B cell (primary cell): ENCODE measurements at regions of chr9 and their contacts with region 1.

Region 1: GRCh38 chr9:114653556-114654159 is 3.9 kb downstream of the TEX53 start:
- DNase-seq: peak; percentile 85
- ATAC-seq: peak; percentile 94
- H3K4me3 ChIP-seq: no peak overlapping the region
- H3K4me3 Mint-ChIP-seq: no peak overlapping the region
- H3K27ac ChIP-seq: peak overlapping the region in 1 of 2 donors; percentile 51
- H3K27ac Mint-ChIP-seq: no peak overlapping the region
- H3K4me1 ChIP-seq: peaks cover 22 to 24% of the 10 kb centered on the region in 2 donors
- H3K4me1 Mint-ChIP-seq: peaks cover 21% of the 10 kb centered on the region
- H3K27me3 ChIP-seq: no peaks in the 10 kb centered on the region
- H3K27me3 Mint-ChIP-seq: no peaks in the 10 kb centered on the region
- CTCF ChIP-seq: peak; percentile 96

Region 2: DNA sequence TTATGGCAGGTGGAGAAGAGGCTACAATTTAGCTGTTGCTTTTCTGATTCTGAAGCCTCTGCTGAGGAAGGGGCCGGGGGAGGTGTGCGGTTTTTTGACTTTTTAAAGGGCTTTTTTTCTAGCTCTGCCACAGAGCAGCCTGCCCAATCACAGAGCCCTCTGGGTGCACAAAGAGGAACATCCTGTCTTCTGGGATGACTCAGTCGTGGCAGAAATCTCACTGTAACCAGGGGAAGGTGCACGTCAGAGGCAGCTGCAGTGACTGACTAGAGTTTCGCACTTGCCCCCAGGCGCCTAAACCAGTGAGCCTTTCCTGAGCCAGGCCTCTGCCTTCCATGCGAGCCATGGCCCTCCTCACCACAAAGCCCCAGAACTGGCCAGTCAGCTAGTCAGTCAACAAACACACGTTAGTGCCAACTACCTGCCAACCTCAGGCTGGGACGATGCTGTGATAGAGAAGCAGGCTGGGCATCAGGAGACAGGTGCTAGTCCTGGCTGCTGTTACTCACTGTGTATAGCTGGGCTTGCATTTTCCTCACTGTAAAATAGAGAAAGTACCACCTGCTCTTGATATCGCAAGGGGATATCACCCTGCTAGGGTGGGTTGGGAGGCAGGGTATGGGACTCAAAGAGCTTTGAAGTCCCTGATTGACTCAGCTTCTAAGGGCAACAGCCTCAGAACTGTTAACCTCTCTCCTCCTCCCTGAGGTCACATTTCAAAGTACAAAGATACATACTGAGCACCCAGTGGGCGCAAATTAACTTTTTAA is 268.1 kb before region 1 on chr9:
- CTCF ChIA-PET with region 1: interaction called, 10 read pairs
- POLR2A ChIA-PET with region 1: no interaction called
- intact Hi-C with region 1: no loop called
- DNase-seq: peak; percentile 92
- ATAC-seq: peak; percentile 83
- H3K4me3 ChIP-seq: peak overlapping the region; percentile 75 to 96 (median 89)
- H3K4me3 Mint-ChIP-seq: peak overlapping the region; percentile 97
- H3K27ac ChIP-seq: peak overlapping the region; percentile 87 to 93
- H3K27ac Mint-ChIP-seq: peak overlapping the region; percentile 93
- H3K4me1 ChIP-seq: peaks cover 65 to 81% of the 10 kb centered on the region in 2 donors
- H3K4me1 Mint-ChIP-seq: peaks cover 81% of the 10 kb centered on the region
- H3K27me3 ChIP-seq: no peaks in the 10 kb centered on the region
- H3K27me3 Mint-ChIP-seq: no peaks in the 10 kb centered on the region
- CTCF ChIP-seq: peak; percentile 8

Region 3: GRCh38 chr9:114434878-114435311 is 218.8 kb before region 1 on chr9:
- CTCF ChIA-PET with region 1: interaction called, 184 read pairs
- POLR2A ChIA-PET with region 1: no interaction called
- intact Hi-C with region 1: loop called (anchors 1 kb)
- DNase-seq: peak; percentile 70
- ATAC-seq: peak; percentile 76
- H3K4me3 ChIP-seq: no peak overlapping the region
- H3K4me3 Mint-ChIP-seq: no peak overlapping the region
- H3K27ac ChIP-seq: no peak overlapping the region
- H3K27ac Mint-ChIP-seq: no peak overlapping the region
- H3K4me1 ChIP-seq: no peaks in the 10 kb centered on the region
- H3K4me1 Mint-ChIP-seq: peaks cover 2% of the 10 kb centered on the region
- H3K27me3 ChIP-seq: peaks cover 0 to under 1% (median 0%) of the 10 kb centered on the region in 4 experiments
- H3K27me3 Mint-ChIP-seq: peaks cover 5% of the 10 kb centered on the region
- CTCF ChIP-seq: peak; percentile 72

Region 4: GRCh38 chr9:114505187-114506081 is 148.2 kb before region 1 on chr9 and contains the start of gene WHRN:
- CTCF ChIA-PET with region 1: interaction called, 78 read pairs
- POLR2A ChIA-PET with region 1: no interaction called
- intact Hi-C with region 1: loop called (anchors 1 kb)
- DNase-seq: peak; percentile 95
- ATAC-seq: peak; percentile 85
- H3K4me3 ChIP-seq: peak within 1 kb of the TSS; percentile 53 to 77 (median 65)
- H3K4me3 Mint-ChIP-seq: peak within 1 kb of the TSS; percentile 90
- H3K27ac ChIP-seq: peak within 1 kb of the TSS in 1 of 2 donors; percentile 62
- H3K27ac Mint-ChIP-seq: peak within 1 kb of the TSS; percentile 90
- H3K4me1 ChIP-seq: peaks cover 29 to 41% of the 10 kb centered on the region in 2 donors
- H3K4me1 Mint-ChIP-seq: peaks cover 43% of the 10 kb centered on the region
- H3K27me3 ChIP-seq: peaks cover 0 to 17% (median 9%) of the 10 kb centered on the region in 4 experiments
- H3K27me3 Mint-ChIP-seq: peaks cover 29% of the 10 kb centered on the region
- CTCF ChIP-seq: no peak
- total RNA-seq, gene WHRN: 95.7 and 96.6 TPM in 2 replicates

Region 5: GRCh38 chr9:114606068-114606467 is 47.6 kb before region 1 on chr9:
- CTCF ChIA-PET with region 1: interaction called, 18 read pairs
- POLR2A ChIA-PET with region 1: no interaction called
- intact Hi-C with region 1: no loop called
- DNase-seq: no peak
- ATAC-seq: no peak
- H3K4me3 ChIP-seq: no peak overlapping the region
- H3K4me3 Mint-ChIP-seq: no peak overlapping the region
- H3K27ac ChIP-seq: no peak overlapping the region
- H3K27ac Mint-ChIP-seq: peak overlapping the region; percentile 53
- H3K4me1 ChIP-seq: peaks cover 41 to 46% of the 10 kb centered on the region in 2 donors
- H3K4me1 Mint-ChIP-seq: peaks cover 50% of the 10 kb centered on the region
- H3K27me3 ChIP-seq: no peaks in the 10 kb centered on the region
- H3K27me3 Mint-ChIP-seq: no peaks in the 10 kb centered on the region
- CTCF ChIP-seq: no peak

Region 6: DNA sequence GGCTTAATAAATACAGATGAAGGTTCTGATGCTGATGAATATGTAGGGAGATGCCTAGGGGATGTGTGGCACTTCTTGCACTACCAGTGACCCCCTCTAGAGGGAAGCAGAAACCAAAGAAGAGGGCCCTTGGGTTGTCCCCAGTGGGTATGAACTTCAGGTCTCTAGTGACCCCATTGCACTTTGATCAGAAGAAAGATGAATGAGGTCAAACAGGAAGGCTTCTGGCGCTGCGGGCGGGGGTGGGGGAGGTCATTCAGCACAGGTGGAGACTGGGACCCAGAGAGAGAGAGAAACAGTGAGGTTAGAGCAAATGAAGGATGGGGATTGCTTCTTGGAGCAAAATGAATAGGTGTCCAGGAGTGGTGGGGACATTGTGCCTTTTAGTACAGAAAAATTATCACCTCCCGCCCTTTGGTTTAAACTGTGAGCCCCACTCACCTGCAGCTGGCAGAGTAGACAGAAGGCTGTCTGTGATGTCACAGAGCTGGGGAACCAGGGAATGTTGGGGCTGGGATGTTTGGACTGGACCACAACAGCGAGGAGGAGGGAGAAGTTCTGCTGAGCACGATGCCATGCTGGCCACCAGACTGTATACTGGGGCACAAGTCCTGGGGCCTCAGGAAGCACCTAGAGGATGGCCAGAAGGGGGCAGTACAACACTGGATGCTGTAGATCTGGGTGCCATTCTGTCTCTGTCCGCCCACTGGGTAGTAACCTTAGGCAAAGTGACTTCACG is 28.1 kb after region 1 on chr9 and contains the start of gene TEX48:
- CTCF ChIA-PET with region 1: interaction called, 10 read pairs
- POLR2A ChIA-PET with region 1: no interaction called
- intact Hi-C with region 1: no loop called
- DNase-seq: peak; percentile 75
- ATAC-seq: peak; percentile 89
- H3K4me3 ChIP-seq: no peak within 1 kb of the TSS
- H3K4me3 Mint-ChIP-seq: no peak within 1 kb of the TSS
- H3K27ac ChIP-seq: no peak within 1 kb of the TSS
- H3K27ac Mint-ChIP-seq: no peak within 1 kb of the TSS
- H3K4me1 ChIP-seq: peaks cover 0 to 4% of the 10 kb centered on the region in 2 donors
- H3K4me1 Mint-ChIP-seq: peaks cover 2% of the 10 kb centered on the region
- H3K27me3 ChIP-seq: peaks cover 0 to 15% (median 8%) of the 10 kb centered on the region in 4 experiments
- H3K27me3 Mint-ChIP-seq: peaks cover 39% of the 10 kb centered on the region
- CTCF ChIP-seq: peak; percentile 77
- total RNA-seq, gene TEX48: not detected in 2 replicates